ENCODE measurements at regions of chr17 and their contacts with region 1.

Region 1: DNA sequence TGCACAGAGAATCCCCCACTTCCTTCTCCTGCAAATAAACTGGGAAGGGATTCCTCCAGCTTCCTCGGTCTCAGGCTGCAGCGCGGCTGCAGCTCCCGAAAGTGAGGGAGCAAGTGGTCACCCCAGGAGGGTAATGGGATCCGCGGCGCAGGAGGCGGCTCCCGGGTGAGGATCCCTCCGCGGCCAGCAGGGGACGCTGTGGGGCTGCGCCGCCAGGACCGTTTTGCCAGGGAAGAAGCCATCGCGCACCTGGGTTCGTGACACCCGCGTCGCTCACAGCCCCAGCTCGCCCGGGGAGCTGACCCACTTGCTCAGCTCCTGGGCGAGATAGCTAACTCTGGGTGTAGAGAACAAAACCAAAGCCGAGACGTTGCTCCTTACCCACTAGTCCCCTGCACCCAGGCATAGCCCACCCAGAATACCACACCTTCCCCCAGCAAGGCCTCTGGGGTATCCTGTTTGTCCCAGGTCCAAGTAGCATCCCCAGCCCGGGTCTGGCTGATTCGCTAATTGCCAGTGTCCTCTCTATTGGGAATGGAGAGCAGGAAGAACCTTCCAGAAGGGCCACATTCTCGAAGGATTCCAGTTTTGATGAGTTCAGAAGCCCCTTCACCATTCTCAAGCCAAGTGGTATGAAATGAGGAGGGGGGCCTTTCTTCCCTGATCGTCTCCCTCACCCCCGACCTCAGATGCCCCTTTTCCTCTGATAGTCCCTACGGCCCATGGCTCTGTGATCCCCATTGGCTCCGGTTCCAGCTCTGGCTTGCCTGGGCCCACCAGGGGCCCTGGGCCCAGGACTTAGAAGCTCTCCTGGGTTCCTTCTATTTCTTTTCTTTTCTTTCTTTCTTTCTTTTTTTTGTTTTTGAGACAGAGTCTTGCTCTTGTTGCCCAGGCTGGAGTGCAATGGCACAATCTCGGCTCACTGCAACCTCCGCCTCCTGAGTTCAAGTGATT is 14.1 kb downstream of the CYGB start:
- DNase-seq: peak; percentile 82
- ATAC-seq: peak; percentile 88
- H3K4me3 Mint-ChIP-seq: no peak overlapping the region
- H3K27ac Mint-ChIP-seq: peak overlapping the region; percentile 46
- H3K4me1 Mint-ChIP-seq: peaks cover 15% of the 10 kb centered on the region
- H3K27me3 Mint-ChIP-seq: no peaks in the 10 kb centered on the region
- CTCF ChIP-seq: peak; percentile 100

Region 2: GRCh38 chr17:76278952-76279741 is 244.2 kb before region 1 on chr17:
- CTCF ChIA-PET with region 1: no interaction called
- POLR2A ChIA-PET with region 1: no interaction called
- intact Hi-C with region 1: no loop called
- DNase-seq: peak; percentile 90
- ATAC-seq: peak; percentile 85
- H3K4me3 Mint-ChIP-seq: no peak overlapping the region
- H3K27ac Mint-ChIP-seq: no peak overlapping the region
- H3K4me1 Mint-ChIP-seq: peaks cover 26% of the 10 kb centered on the region
- H3K27me3 Mint-ChIP-seq: no peaks in the 10 kb centered on the region
- CTCF ChIP-seq: peak; percentile 98

Region 3: DNA sequence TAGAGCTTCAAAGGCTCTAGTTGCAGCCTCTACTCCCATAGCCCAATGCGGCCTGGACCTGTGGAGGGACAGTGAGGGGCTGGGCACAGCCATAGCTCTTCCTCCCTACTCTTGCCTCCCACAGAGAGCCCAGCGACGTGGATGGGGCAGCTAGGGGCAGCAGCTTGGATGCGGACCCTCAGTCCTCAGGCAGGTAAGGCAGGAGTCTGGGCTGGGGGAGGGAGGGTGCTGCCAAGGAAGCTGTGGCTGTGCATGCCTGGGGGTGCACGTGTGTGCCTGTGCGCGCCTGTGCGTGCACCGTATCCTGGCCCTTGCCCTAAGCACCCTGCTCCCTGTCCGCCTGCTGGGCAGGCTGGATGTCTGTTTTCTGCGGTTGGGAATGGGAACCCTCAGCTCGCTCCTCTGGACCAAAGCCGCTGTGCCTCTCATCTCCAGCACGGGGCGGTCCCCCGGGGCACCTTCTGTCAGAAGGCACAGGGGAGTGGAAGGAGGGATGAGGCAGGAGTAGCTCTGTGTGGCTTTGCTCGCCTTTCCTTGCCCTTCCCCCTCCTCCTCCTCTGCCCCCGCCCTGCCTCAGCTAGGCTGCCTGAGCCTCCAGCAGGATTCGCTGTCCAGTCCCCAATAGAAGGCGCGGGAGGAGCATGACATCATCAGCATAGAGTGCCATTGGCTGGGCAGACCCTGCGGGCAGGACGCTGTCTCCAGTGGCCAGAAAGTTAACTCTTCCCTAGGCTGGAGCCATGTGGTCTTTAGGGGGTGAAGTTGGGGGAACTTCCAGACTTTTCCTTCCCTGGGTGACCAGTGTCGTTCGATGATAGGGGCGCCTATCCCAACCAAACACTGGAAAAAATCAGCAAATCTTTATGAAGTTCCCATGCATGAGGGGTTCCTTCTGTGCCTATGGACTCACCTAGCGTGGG is 17.3 kb after region 1 on chr17:
- CTCF ChIA-PET with region 1: interaction called, 69 read pairs
- POLR2A ChIA-PET with region 1: interaction called, 12 read pairs
- intact Hi-C with region 1: no loop called
- DNase-seq: peak; percentile 50
- ATAC-seq: peak; percentile 84
- H3K4me3 Mint-ChIP-seq: no peak overlapping the region
- H3K27ac Mint-ChIP-seq: no peak overlapping the region
- H3K4me1 Mint-ChIP-seq: peaks cover 8% of the 10 kb centered on the region
- H3K27me3 Mint-ChIP-seq: peaks cover 26% of the 10 kb centered on the region
- CTCF ChIP-seq: no peak

Region 4: DNA sequence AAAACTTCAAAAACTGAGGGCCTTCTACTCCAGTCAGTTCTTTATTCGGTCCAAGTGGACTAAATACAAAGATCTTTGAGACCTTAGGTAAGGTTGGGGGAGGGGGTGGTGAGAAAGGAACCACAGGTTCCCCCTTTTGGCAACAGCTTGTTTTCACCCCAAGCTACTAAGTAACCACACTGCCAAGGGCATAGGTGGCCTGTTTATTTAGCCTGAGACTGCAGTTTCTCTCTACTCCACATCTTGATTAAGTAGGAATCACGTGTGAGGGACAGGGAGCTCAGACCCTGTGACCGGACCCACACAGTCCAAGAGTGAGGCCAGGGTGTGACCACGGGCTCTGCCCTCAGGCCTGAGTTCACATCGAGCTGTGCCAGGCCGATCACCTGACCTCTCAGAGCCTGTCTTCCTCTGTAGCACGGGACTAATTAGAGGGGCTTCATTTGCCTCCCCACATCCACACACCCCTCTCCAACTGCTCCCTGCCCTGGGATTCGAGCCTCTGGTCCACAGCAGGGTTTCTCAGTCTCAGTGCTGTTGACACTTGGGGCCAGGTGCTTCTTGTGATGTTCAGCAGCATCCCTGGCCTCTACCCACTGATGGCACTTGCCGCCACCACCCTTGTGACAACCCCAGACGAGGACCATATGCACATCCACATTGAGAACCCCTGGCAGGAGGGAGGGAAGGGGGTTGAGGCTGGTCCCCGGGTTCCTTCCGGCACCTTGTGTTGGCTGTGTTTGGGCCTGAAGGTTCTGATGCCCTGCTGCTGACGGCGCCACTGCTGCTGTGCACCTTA is 44.5 kb after region 1 on chr17:
- CTCF ChIA-PET with region 1: interaction called, 10 read pairs
- POLR2A ChIA-PET with region 1: interaction called, 6 read pairs
- intact Hi-C with region 1: no loop called
- DNase-seq: no peak
- ATAC-seq: no peak
- H3K4me3 Mint-ChIP-seq: no peak overlapping the region
- H3K27ac Mint-ChIP-seq: peak overlapping the region; percentile 30
- H3K4me1 Mint-ChIP-seq: peaks cover 41% of the 10 kb centered on the region
- H3K27me3 Mint-ChIP-seq: no peaks in the 10 kb centered on the region
- CTCF ChIP-seq: no peak

Region 5: DNA sequence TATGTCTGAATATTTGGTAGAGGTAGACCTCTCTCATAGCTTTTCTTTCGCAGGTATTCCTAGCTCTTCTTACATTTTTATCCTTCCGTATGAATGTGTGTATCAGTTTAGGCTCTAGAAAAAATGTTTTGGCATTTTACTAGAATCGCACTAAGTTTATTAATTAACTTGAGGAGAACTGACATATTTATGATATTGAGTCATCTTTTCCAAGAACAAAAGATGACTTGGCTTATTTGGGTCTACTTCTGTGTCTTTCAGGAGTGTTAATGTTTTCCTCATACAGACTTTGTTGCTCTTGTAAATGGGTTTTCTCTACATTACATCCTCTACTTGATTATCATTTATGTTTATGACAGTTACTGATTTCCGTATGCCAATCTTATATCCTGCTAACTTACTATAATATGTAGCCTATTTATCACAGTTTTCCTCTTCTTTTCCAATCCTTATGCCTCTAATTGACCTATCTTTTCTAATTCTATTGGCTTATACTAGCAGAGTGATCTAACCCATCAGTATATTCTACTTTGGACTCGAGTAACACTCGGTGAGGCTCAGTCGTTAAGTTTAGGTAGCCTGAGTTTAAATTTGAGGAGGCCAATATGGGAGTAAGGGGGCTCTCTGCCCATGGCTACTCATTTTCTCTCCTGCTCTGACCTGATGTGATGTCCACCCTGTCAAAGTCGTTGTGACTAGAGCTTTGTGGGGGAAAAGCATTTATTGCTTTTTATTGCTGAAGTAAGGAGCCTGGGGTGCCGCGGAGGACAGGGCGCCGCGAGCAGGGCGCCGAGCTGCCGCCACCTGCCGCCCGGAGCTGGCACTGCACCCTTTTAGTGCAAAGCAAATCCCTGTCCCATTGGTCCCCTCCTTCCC is 100.1 kb after region 1 on chr17:
- CTCF ChIA-PET with region 1: interaction called, 104 read pairs
- POLR2A ChIA-PET with region 1: no interaction called
- intact Hi-C with region 1: loop called (anchors 2 kb)
- DNase-seq: peak; percentile 83
- ATAC-seq: peak; percentile 98
- H3K4me3 Mint-ChIP-seq: no peak overlapping the region
- H3K27ac Mint-ChIP-seq: no peak overlapping the region
- H3K4me1 Mint-ChIP-seq: peaks cover 7% of the 10 kb centered on the region
- H3K27me3 Mint-ChIP-seq: peaks cover 1% of the 10 kb centered on the region
- CTCF ChIP-seq: peak; percentile 98

Region 6: DNA sequence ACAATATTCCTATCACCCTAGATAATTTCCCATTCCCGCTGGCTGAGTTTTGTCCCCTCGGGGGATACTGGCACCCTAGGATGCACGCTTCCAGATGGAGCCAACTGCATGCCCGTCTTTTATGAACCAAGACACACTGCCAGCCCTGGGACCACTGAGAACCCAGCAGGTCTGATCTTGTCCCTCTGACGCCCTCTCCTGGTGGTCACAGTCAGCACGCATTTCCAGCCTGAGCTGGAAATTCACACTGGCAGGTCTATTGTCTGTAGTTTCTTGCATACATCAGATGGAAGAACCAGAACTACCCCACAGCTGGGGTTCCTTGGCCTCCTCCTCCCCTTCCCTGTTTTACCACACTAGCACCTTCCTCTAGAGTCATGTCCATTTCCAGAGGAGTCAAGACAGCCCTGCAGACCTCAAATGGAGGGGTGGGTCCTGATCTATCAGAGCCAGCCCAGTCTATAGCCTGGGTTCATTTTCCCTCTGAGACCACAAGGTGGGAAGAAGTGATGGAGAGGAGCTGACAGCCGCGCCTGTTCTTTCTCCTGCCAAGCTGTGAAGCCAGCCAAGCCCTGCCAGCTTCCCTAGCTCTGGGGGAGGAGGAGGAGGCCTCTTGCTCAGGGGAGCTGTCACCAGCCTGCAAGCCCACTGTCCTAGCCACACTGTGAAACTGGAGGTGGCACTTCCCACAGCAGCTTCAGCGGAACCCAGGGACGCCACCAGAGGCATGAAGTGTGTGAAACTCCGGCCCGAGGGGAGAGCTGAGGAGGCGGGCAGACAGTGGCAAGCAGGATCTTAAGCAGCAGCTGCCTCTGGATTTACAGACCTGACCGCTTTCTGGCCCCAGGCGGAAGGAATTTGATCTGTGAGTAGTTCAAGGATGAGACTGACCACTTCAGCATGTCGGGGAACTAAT is 158.1 kb after region 1 on chr17:
- CTCF ChIA-PET with region 1: interaction called, 41 read pairs
- POLR2A ChIA-PET with region 1: no interaction called
- intact Hi-C with region 1: no loop called
- DNase-seq: peak; percentile 87
- ATAC-seq: peak; percentile 80
- H3K4me3 Mint-ChIP-seq: no peak overlapping the region
- H3K27ac Mint-ChIP-seq: no peak overlapping the region
- H3K4me1 Mint-ChIP-seq: peaks cover 5% of the 10 kb centered on the region
- H3K27me3 Mint-ChIP-seq: no peaks in the 10 kb centered on the region
- CTCF ChIP-seq: peak; percentile 81

Region 7: DNA sequence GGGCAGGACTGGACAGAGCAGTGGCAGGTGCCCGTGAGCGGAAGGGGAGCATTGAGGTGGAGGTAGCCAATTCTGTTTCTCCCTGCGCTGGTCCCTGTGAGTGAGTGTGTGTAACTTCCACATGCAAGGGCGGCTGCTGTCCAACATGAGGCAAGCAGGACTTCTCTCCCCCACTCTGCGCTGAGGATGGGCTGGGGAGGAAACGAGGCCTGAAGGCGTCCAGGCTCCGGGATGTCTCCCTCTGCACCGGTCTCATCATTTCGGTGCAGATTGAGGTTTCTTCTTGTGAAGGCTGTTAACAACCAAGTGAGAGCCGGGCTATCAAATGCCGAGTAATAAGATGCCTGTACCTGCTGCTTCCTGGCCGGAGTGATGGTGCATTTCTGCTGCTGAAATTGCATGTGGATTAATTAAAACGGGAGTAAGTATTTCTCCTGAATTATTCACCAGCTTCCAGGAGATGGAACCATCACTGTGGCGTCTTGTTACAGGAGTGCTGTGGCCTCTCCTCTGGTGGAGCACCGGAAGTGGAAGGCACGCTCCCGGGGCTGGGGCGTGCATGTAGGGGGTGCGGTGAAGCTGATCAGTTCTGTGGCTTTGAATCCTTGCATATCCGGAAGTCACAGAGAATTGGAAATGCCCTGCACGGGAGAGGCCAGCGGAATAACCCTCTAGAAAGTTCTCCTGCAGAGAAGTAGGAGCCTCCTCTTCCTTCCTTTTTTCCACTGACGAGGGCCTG is 303.1 kb after region 1 on chr17:
- CTCF ChIA-PET with region 1: no interaction called
- POLR2A ChIA-PET with region 1: no interaction called
- intact Hi-C with region 1: no loop called
- DNase-seq: no peak
- ATAC-seq: no peak
- H3K4me3 Mint-ChIP-seq: no peak overlapping the region
- H3K27ac Mint-ChIP-seq: no peak overlapping the region
- H3K4me1 Mint-ChIP-seq: peaks cover 7% of the 10 kb centered on the region
- H3K27me3 Mint-ChIP-seq: no peaks in the 10 kb centered on the region
- CTCF ChIP-seq: no peak

Region 8: DNA sequence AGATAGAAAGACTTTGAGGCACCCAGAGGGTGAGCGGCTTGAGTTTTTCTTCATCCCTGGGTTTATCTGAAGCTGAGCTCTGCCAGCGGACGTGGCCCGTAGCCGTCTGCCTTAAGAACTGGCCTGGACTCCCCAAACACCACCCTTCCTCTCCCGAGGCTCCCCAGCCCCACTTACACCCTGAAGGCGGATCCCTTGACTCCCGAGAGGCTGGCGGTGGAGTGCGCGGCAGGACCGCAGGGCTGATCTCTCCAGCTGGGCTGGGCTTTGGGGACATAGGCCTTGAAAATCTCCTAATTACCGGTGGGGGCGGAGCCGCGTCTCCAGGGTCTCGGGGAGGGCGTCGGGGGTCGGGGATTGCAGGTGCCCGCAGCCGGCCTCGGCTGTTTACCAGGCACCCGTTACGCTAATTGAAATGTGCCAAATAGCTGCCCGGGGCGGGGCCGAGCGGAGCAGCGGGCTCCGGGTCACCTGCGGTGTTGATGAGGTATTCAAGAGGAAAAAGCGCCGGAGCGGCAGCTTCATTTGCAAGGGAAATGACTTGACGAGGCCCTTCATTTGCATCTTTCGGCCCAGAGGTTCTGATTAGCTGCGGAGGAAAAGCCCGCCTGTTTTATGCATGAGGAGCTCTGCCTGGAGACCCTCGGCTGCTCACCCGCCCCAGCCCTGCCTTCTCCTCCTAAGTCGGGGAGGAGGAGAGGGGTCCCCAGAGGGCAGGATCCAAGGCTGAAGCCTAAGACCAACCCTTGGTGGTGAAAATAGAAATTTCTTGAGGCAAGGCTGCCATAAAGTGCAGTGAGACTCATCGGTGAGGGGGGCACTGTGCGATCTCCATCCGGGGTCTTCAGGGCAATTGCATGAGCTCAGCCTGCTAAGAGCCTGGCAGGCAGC is 445.6 kb after region 1 on chr17:
- CTCF ChIA-PET with region 1: no interaction called
- POLR2A ChIA-PET with region 1: no interaction called
- intact Hi-C with region 1: no loop called
- DNase-seq: peak; percentile 80
- ATAC-seq: peak; percentile 88
- H3K4me3 Mint-ChIP-seq: peak overlapping the region; percentile 66
- H3K27ac Mint-ChIP-seq: peak overlapping the region; percentile 34
- H3K4me1 Mint-ChIP-seq: peaks cover 7% of the 10 kb centered on the region
- H3K27me3 Mint-ChIP-seq: peaks cover 3% of the 10 kb centered on the region
- CTCF ChIP-seq: no peak